Dendritic cell treated with granulocyte-macrophage colony-stimulating factor and Interleukin-4, amounts not matched to agents 40 ng/mL and 50 ng/mL, for 4 days (primary cell): ENCODE measurements at regions of chr4 and their contacts with region 1.

Region 1: GRCh38 chr4:74376888-74377483 is 12.0 kb downstream of the EREG start:
- H3K4me3 Mint-ChIP-seq: no peak overlapping the region
- H3K27ac Mint-ChIP-seq: no peak overlapping the region
- H3K4me1 Mint-ChIP-seq: peaks cover 20% of the 10 kb centered on the region
- H3K27me3 Mint-ChIP-seq: no peaks in the 10 kb centered on the region

Region 2: DNA sequence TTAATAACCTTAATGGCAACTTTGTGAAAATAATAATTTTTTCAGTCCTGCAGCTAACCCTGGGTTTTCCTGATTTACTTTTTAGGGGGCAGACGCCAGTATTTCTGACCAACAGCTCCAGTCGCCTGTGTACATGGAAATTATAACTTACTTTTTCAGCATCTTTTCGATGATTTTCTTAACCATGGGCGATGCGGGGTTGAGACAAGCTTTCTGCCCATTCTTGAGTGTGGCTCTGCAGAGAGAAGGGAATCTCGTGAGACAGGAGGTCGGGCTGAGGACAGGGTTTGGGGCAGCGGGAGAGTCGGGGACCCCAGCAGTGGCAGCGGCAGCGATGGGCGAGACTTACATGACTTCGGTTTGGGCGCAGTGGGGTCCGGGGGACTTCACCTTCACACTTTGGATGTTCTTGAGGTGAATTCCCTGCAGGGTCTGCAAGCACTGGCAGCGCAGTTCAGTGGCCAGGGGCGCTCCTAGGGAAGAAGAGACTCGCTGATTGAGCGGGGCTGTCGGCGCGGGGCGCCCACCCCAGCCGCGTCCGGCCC is 278.5 kb before region 1 on chr4:
- intact Hi-C with region 1: no loop called
- H3K4me3 Mint-ChIP-seq: peak overlapping the region; percentile 88
- H3K27ac Mint-ChIP-seq: peak overlapping the region; percentile 90
- H3K4me1 Mint-ChIP-seq: peaks cover 34% of the 10 kb centered on the region
- H3K27me3 Mint-ChIP-seq: peaks cover 19% of the 10 kb centered on the region

Region 3: DNA sequence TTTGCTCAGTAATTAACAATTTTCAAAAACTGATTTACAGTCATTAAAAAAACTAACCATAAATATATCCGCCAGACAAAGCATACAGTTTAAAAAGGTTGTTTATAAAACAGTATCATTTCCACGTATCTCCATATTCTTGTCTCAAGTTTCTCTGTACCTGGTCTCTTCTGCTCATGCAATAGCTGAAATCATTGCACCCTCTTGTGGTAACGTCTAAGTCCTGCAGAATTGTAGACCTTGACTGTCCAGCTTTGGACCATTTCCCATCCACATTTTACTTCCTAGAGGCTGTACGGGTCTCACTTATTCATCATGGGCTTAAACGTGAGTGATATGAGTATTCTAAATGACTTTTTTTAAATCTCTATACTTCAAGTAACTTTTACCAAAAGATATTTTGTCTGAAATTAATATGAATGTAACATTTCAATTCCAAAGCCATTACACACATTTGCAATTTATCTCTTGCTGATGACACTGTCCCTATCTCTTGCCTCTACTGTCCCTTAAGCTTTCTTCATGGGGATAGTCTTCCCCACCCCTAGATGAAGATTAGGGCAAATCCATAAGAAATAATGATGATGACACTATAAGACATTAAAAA is 298.8 kb after region 1 on chr4:
- intact Hi-C with region 1: loop called (anchors 2 kb)
- H3K4me3 Mint-ChIP-seq: no peak overlapping the region
- H3K27ac Mint-ChIP-seq: no peak overlapping the region
- H3K4me1 Mint-ChIP-seq: peaks cover 6% of the 10 kb centered on the region
- H3K27me3 Mint-ChIP-seq: no peaks in the 10 kb centered on the region